Sigmoid colon (tissue), 7 donors: ENCODE measurements at regions of chr6 and their contacts with region 1.

Region 1: DNA sequence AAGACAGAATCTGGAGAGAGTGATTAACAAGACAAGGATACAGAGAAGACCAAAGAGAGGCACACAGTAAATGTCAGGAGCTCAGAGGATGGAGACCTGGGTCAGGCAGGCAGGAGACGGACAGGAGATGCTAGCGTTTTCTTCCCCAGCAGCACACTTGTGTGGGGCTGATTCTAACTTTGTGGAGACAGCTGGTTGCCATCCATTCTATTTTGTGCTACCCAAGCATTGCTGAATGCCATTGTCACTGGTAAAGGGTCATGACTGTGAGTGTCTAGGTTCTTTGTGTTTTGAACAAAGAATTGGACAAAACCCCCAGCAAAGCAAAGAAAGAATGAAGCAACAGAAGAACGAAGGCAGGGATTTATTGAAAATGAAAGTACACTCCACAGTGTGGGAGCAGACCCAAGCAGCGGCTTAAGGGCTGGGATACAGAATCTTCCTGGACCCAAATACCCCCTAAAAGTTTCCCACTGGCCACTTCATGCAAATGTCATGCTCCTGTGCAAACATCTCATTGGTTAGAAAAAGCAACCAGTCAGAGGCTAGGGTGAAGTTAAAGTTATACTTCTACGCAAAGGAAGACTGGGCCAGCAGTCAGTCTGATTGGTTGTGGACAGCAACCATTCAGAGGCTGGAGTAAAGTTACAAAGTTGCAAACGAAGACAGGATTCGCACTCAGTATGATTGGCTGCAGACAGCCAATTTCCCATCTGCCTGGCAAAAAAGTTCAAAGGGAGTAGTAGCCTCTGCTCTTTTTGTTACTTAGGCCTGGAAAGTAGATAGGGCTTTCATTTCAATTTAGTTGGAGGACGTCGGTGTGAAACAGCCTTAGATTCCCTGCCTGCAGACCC is 17.5 kb downstream of the PTK7 start:
- DNase-seq: peak; percentile 86
- H3K4me3 ChIP-seq: peak overlapping the region; percentile 34 to 47 (median 44)
- H3K27ac ChIP-seq: peak overlapping the region; percentile 35 to 79 (median 75)
- H3K4me1 ChIP-seq: peaks cover 0 to 12% (median 5%) of the 10 kb centered on the region in 4 donors
- H3K27me3 ChIP-seq: no peaks in the 10 kb centered on the region
- CTCF ChIP-seq: no peak
- EP300 ChIP-seq: no peak
- POLR2A ChIP-seq: no peak

Region 2: GRCh38 chr6:43059168-43060033 is 34.3 kb before region 1 on chr6 and contains the starts of genes KLC4 and MRPL2:
- intact Hi-C with region 1: loop called (anchors 1 kb)
- DNase-seq: peak; percentile 99
- H3K4me3 ChIP-seq: peak within 1 kb of the TSS; percentile 74 to 97 (median 87)
- H3K27ac ChIP-seq: peak within 1 kb of the TSS; percentile 84 to 93 (median 90)
- H3K4me1 ChIP-seq: peaks cover 0 to 36% (median 23%) of the 10 kb centered on the region in 4 donors
- H3K27me3 ChIP-seq: no peaks in the 10 kb centered on the region
- CTCF ChIP-seq: no peak
- EP300 ChIP-seq: peak in 1 of 4 donors; percentile 61
- POLR2A ChIP-seq: peak; percentile 83 to 87
- total RNA-seq, gene KLC4: 23.2 to 44.9 (median 34.6) TPM
- total RNA-seq, gene MRPL2: 14.1 to 25.7 (median 18.3) TPM